ENCODE measurements at regions of chr1 and their contacts with region 1.

Region 1: DNA sequence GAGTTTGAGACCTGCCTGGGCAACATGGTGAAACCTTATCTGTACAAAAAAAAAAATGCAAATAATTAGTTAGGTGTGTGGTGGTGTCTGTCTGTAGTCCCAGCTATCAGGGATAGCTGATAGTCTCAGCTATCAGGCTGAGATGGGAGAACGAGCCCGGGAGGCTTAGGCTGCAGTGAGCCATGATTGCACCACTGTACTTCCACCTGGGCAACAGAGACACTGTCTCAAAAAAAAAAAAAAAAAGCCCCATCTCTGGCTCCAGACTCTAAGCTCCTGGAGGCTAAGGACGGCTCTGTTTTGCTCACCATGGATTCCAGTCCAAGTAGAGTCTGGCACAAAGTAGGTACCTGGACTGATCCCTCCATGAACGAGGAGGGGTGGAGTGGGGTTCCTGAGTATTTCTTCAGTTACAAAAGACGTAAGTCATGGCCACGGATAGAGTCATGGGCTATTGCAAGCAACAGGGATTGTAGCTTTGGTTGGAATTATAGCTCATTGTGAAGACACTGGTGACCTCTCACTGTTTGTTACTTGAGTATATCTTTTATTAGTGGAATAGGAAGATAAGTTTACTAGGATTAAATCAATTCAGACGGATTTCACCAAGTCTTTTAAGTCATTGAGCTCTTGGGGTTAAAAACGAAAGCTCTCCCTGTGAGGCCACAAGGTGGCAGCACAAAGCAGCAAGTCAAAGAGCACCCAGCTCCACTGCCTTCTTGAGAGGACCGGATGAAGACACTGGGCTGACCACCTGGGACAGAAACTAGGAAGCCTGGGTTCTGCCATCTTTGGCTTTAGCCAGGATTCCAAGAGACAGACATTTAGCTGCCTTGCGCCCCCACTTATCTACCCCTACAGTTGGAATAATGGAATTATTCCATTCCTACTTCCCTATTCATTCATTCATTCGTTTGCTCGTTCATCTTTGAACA is 35.6 kb upstream of the TMEM61 start:
- DNase-seq: peak; percentile 63 to 80
- ATAC-seq: peak; percentile 93 to 94
- H3K4me3 ChIP-seq: no peak overlapping the region
- H3K27ac ChIP-seq: no peak overlapping the region
- H3K4me1 ChIP-seq: peaks cover 7% of the 10 kb centered on the region
- CTCF ChIP-seq: peak; percentile 74
- EP300 ChIP-seq: no peak
- POLR2A ChIP-seq: no peak
- RAD21 ChIP-seq: peak; percentile 74 to 77

Region 2: GRCh38 chr1:54922921-54923531 is 21.9 kb before region 1 on chr1:
- CTCF ChIA-PET with region 1: interaction called, 10 read pairs
- POLR2A ChIA-PET with region 1: no interaction called
- DNase-seq: no peak
- ATAC-seq: no peak
- H3K4me3 ChIP-seq: no peak overlapping the region
- H3K27ac ChIP-seq: no peak overlapping the region
- H3K4me1 ChIP-seq: no peaks in the 10 kb centered on the region
- CTCF ChIP-seq: no peak
- EP300 ChIP-seq: no peak
- POLR2A ChIP-seq: no peak
- RAD21 ChIP-seq: no peak

Region 3: GRCh38 chr1:54934869-54935268 is 10.0 kb before region 1 on chr1:
- CTCF ChIA-PET with region 1: interaction called, 28 read pairs
- POLR2A ChIA-PET with region 1: no interaction called
- DNase-seq: peak in 1 of 2 experiments; percentile 46
- ATAC-seq: peak; percentile 54 to 84; a peak in 4 of 6 replicates
- H3K4me3 ChIP-seq: no peak overlapping the region
- H3K27ac ChIP-seq: peak overlapping the region in 1 of 2 experiments; percentile 68; a peak in 2 of 6 replicates
- H3K4me1 ChIP-seq: peaks cover 13% of the 10 kb centered on the region; the same call in 2 of the 3 replicates
- CTCF ChIP-seq: no peak
- EP300 ChIP-seq: no peak
- POLR2A ChIP-seq: no peak
- RAD21 ChIP-seq: no peak

Region 4: GRCh38 chr1:54996359-54996868 is 51.5 kb after region 1 on chr1:
- CTCF ChIA-PET with region 1: interaction called, 451 read pairs
- POLR2A ChIA-PET with region 1: interaction called, 3 read pairs
- DNase-seq: peak; percentile 67 to 87
- ATAC-seq: peak; percentile 80 to 95; a peak in 5 of 6 replicates
- H3K4me3 ChIP-seq: no peak overlapping the region
- H3K27ac ChIP-seq: 0 out of 6 replicates have a peak overlapping the region, but pooled peaks of 1 of the 2 experiments have one; percentile 50
- H3K4me1 ChIP-seq: 0 out of 3 replicates have a peak, but pooled peaks cover 4% of the 10 kb centered on the region
- CTCF ChIP-seq: peak; percentile 69
- EP300 ChIP-seq: no peak
- POLR2A ChIP-seq: no peak
- RAD21 ChIP-seq: peak; percentile 87 to 92

Region 5: DNA sequence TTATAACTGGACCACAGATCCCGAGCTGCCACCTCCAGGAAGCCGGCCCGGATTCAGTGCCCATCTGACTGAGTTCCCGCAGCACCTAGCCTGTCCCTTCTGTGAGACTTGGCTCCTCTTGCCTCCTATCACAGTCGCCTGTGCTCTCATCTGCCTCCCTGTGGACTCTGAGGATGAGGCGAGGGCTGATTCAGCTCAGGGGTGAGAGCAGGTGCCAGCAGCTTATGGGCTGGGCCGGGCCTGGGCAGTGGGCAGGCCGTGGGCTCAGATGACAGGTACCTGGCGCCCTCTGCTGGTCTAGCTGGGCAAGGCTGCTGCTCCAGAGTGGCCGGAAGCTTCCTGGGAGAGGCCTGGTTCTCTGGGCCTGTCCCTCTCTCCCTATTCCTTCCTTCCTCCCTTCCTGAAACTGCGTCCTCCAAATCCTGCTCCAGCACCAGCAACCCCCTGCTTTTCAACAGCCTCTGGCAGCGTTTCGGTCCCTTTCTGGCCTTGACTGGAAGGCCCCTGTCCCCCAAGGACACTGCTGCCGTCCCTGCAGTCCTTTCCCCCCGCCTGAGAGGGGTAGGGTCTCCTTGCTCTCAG is 77.2 kb after region 1 on chr1:
- CTCF ChIA-PET with region 1: interaction called, 41 read pairs
- POLR2A ChIA-PET with region 1: interaction called, 8 read pairs
- DNase-seq: peak; percentile 83 to 87
- ATAC-seq: peak; percentile 99 to 100
- H3K4me3 ChIP-seq: no peak overlapping the region
- H3K27ac ChIP-seq: peak overlapping the region; percentile 50 to 81; a peak in 4 of 6 replicates
- H3K4me1 ChIP-seq: no peaks in the 10 kb centered on the region
- CTCF ChIP-seq: peak; percentile 79
- EP300 ChIP-seq: no peak
- POLR2A ChIP-seq: no peak
- RAD21 ChIP-seq: peak; percentile 77

Region 6: GRCh38 chr1:55048453-55049270 is 103.8 kb after region 1 on chr1:
- CTCF ChIA-PET with region 1: no interaction called
- POLR2A ChIA-PET with region 1: no interaction called
- DNase-seq: no peak
- ATAC-seq: peak in 1 of 2 experiments; percentile 35; a peak in 3 of 6 replicates
- H3K4me3 ChIP-seq: no peak overlapping the region
- H3K27ac ChIP-seq: no peak overlapping the region
- H3K4me1 ChIP-seq: no peaks in the 10 kb centered on the region
- CTCF ChIP-seq: no peak
- EP300 ChIP-seq: no peak
- POLR2A ChIP-seq: no peak
- RAD21 ChIP-seq: no peak